Activated B cell treated with CpG ODN at 0.5 μM for 24 hours (primary cell): ENCODE measurements at regions of chr21 and their contacts with region 1.

Region 1: GRCh38 chr21:33641336-33642026 is at the start of gene CRYZL1:
- DNase-seq: peak; percentile 99
- ATAC-seq: peak; percentile 78
- H3K4me3 Mint-ChIP-seq: peak within 1 kb of the TSS; percentile 98
- H3K27ac Mint-ChIP-seq: peak within 1 kb of the TSS; percentile 99
- H3K4me1 Mint-ChIP-seq: peaks cover 19% of the 10 kb centered on the region
- H3K27me3 Mint-ChIP-seq: peaks cover 14% of the 10 kb centered on the region
- CTCF ChIP-seq: no peak
- total RNA-seq, gene CRYZL1: 37.1 and 46.3 TPM in 2 replicates

Region 2: DNA sequence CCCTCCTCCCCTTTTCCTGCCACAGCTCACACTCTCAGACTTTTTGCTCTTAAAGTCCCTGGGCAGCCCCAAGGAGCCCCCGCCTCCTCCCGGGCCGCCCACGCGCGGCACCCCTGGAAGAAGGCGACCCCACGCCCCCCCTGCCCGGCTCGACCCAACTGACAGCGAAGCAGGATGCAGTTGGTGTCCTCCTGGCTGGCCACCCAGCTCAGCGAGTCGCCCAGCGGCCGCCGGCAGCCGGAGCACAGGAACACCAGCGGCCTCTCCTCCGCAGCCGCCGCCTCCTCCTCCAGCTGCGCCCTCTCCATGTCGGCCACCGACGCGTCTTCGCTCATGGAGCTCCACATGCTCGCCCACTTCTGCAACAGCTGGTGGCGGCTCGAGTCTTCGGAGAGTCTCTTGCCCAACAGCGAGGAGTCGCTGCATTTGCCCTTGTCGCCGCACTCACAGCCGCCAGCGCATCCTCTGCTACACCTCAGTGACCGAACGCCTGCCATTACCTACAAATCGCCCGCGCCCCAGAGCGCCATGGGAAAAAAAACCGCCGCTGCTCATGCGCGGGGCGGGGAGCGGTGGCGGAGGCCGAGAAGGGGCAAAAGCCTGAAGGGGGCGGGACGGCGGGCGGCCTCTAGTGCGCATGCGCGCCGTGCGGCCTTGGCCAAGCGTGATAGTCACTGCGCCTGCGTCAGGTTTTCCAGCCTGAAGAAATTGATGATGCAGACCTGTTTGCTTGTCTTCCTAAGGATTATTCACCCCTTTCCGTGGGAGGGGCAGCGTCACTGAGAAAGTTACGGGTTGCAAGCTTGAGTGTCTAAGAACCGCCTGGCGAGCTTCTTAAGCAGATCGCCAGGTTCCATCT is 1362.7 kb before region 1 on chr21 and contains the start of gene MIS18A:
- CTCF ChIA-PET with region 1: no interaction called
- POLR2A ChIA-PET with region 1: no interaction called
- intact Hi-C with region 1: loop called (anchors 1 kb)
- DNase-seq: peak; percentile 96
- ATAC-seq: peak; percentile 96
- H3K4me3 Mint-ChIP-seq: peak within 1 kb of the TSS; percentile 98
- H3K27ac Mint-ChIP-seq: peak within 1 kb of the TSS; percentile 88
- H3K4me1 Mint-ChIP-seq: peaks cover 16% of the 10 kb centered on the region
- H3K27me3 Mint-ChIP-seq: no peaks in the 10 kb centered on the region
- CTCF ChIP-seq: no peak
- total RNA-seq, gene MIS18A: 6.8 and 7.7 TPM in 2 replicates

Region 3: GRCh38 chr21:32770871-32771523 is 870.5 kb before region 1 on chr21:
- CTCF ChIA-PET with region 1: no interaction called
- POLR2A ChIA-PET with region 1: interaction called, 3 read pairs
- intact Hi-C with region 1: loop called (anchors 1 kb)
- DNase-seq: no peak
- ATAC-seq: peak; percentile 37
- H3K4me3 Mint-ChIP-seq: peak overlapping the region; percentile 96
- H3K27ac Mint-ChIP-seq: peak overlapping the region; percentile 88
- H3K4me1 Mint-ChIP-seq: peaks cover 45% of the 10 kb centered on the region
- H3K27me3 Mint-ChIP-seq: peaks cover 2% of the 10 kb centered on the region
- CTCF ChIP-seq: no peak

Region 4: DNA sequence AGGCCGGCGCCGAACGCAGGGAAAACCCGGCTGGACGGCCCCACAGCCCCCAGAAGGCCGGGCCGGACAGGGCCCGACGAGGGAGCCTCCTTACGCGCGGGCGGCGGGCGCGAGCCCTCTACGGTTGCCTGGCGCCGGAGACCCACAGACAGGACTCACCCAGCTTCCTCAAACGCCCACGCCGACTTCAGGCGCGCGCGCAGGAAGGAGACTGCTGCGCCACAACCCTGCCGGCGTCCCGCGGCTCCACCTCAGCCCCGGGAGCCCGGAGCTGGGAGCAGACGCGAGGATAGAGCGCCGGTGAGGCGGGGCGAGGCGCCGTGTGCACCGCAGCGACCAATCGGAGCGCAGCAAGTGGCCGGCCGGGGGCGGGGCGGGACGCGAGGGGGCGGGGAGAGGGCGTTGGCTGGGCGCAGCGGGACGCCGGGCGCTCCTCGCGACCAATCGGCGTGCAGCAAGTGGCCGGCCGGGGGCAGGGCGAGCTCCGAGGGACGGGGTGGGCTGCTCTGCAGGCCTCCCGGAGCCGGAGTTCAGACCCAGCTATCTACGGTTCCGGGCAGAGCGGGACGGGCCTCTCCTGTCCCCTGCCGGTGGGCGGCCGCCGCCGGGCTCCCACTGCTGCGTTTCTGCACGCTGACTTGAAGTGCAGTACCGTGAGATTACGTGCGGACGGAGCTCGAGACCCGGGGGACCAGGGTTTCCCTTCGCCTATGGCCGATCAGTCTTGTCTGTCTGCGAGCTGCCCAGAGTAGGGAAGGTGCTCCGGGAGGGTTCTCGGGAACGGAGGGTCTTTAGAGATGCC is 161.6 kb before region 1 on chr21 and contains the start of gene TMEM50B:
- CTCF ChIA-PET with region 1: no interaction called
- POLR2A ChIA-PET with region 1: interaction called, 7 read pairs
- intact Hi-C with region 1: loop called (anchors 1 kb)
- DNase-seq: peak; percentile 88
- ATAC-seq: peak; percentile 88
- H3K4me3 Mint-ChIP-seq: peak within 1 kb of the TSS; percentile 92
- H3K27ac Mint-ChIP-seq: peak within 1 kb of the TSS; percentile 90
- H3K4me1 Mint-ChIP-seq: peaks cover 20% of the 10 kb centered on the region
- H3K27me3 Mint-ChIP-seq: no peaks in the 10 kb centered on the region
- CTCF ChIP-seq: no peak
- total RNA-seq, gene TMEM50B: 42.3 and 47.2 TPM in 2 replicates

Region 5: DNA sequence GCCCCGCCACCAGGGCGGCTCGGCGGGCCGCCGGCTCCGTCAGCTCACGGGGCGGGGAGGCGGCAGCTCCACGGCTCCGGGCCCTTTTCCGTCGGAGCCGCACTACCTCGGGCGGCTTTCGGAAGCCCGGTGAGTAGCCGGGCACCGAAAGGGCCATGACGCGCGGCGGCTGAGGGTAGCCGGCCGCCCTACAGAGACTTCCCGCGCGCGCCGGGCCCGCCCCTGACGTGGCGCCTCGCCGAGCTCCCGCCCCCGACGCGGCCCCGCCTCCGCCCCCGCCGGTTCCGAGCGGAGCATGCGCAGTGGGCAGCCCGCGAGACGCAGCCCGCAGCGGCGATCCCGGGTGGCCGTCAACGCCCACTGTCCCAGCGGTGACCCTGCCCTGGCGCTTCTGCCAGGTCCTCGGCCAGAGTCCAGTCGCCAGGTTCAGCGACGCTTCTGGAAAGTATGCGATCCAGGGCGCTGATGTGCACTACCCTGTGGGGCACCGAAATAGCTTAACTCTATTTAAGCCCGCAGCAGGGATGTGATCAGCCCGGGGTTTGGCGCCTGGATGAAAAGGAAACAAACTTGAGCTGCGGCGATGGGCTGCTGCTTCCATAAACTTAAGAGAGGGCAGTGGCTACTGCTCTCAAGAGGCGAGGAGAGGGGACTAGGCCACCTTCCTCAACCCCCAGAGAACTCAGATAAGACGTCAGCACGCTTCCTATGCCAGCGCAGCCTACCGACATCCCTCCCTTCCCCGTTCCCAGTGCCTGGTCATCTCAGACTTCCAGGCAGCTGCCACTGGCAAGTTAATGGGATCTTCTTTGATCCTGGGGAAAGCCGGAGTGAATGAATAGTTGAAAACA is 52.8 kb before region 1 on chr21 and contains the start of gene DONSON:
- CTCF ChIA-PET with region 1: no interaction called
- POLR2A ChIA-PET with region 1: interaction called, 4 read pairs
- intact Hi-C with region 1: loop called (anchors 1 kb)
- DNase-seq: peak; percentile 94
- ATAC-seq: peak; percentile 95
- H3K4me3 Mint-ChIP-seq: peak within 1 kb of the TSS; percentile 90
- H3K27ac Mint-ChIP-seq: peak within 1 kb of the TSS; percentile 56
- H3K4me1 Mint-ChIP-seq: peaks cover 10% of the 10 kb centered on the region
- H3K27me3 Mint-ChIP-seq: no peaks in the 10 kb centered on the region
- CTCF ChIP-seq: no peak
- total RNA-seq, gene DONSON: 4.4 and 4.7 TPM in 2 replicates

Region 6: GRCh38 chr21:34012640-34013039 is 371.2 kb after region 1 on chr21:
- CTCF ChIA-PET with region 1: no interaction called
- POLR2A ChIA-PET with region 1: no interaction called
- intact Hi-C with region 1: no loop called
- DNase-seq: no peak
- ATAC-seq: no peak
- H3K4me3 Mint-ChIP-seq: no peak overlapping the region
- H3K27ac Mint-ChIP-seq: no peak overlapping the region
- H3K4me1 Mint-ChIP-seq: no peaks in the 10 kb centered on the region
- H3K27me3 Mint-ChIP-seq: no peaks in the 10 kb centered on the region
- CTCF ChIP-seq: no peak

Region 7: DNA sequence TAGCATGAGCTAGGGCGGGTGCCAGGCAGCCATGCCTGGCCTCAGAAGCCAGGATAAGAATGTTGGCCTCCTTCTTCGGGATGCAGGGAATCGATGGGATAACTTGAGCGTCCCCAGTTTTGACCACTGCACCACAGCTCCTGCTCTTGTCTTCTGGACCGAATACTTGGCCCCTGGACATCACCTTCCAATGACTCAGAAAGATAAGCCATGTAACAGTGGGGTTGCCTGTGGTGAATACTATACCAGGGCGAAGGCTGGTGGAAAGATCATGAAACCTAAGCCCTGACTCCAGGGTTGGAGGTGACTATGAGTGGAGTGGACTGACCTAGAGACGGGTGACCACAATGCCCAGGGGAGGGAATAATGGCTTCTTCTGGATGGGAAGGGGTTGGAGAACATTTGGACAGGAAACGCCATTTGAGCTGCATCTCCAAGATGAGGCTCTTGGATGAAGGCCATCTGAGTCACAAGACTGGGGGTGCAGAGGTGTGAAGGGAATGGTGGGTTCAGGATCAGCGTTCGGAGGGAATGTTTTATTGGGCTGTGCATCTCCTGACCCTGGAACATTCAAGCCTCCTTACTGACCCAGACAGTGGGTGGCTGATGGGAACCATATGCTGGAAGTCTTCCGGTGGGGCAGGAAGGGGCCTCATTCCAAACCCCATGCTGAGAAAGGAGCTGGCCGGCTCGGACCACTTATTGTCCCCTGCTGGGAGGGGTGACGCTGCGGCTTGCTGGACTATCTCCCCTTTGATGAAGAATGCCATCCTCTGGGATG is 703.8 kb after region 1 on chr21:
- CTCF ChIA-PET with region 1: no interaction called
- POLR2A ChIA-PET with region 1: no interaction called
- intact Hi-C with region 1: loop called (anchors 5 kb)
- DNase-seq: no peak
- ATAC-seq: no peak
- H3K4me3 Mint-ChIP-seq: no peak overlapping the region
- H3K27ac Mint-ChIP-seq: no peak overlapping the region
- H3K4me1 Mint-ChIP-seq: peaks cover 3% of the 10 kb centered on the region
- H3K27me3 Mint-ChIP-seq: peaks cover 8% of the 10 kb centered on the region
- CTCF ChIP-seq: no peak